ENCODE measurements at regions of chr3 and their contacts with region 1.

Region 1: GRCh38 chr3:82293867-82294266 is 532.4 kb upstream of the GBE1 start:
- DNase-seq: no peak
- H3K4me3 Mint-ChIP-seq: no peak overlapping the region
- H3K27ac Mint-ChIP-seq: no peak overlapping the region
- H3K4me1 Mint-ChIP-seq: no peaks in the 10 kb centered on the region
- H3K27me3 Mint-ChIP-seq: no peaks in the 10 kb centered on the region

Region 2: GRCh38 chr3:82236257-82236656 is 57.6 kb before region 1 on chr3:
- intact Hi-C with region 1: loop called (anchors 10 kb)
- DNase-seq: no peak
- H3K4me3 Mint-ChIP-seq: no peak overlapping the region
- H3K27ac Mint-ChIP-seq: no peak overlapping the region
- H3K4me1 Mint-ChIP-seq: no peaks in the 10 kb centered on the region
- H3K27me3 Mint-ChIP-seq: no peaks in the 10 kb centered on the region

Region 3: DNA sequence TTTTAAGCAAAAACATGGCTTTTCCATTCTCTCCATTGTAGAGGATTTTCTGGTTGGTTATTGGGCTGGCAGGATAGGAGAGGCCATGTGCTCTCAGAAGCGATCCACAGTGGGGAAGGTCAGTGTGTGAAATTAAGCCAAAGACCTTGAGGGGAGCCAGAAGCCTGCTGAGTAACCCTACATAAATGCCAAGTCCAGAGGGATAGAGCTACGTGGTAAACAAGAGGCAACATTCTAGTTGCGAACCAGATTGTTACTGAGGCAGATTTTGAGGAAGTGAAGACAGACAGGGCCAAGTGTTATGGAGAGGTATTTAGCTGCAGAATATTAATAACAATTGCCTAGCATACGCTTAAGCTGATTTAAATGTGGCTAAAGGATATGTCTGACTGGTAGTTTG is 60.4 kb after region 1 on chr3:
- intact Hi-C with region 1: no loop called
- DNase-seq: no peak
- H3K4me3 Mint-ChIP-seq: no peak overlapping the region
- H3K27ac Mint-ChIP-seq: no peak overlapping the region
- H3K4me1 Mint-ChIP-seq: no peaks in the 10 kb centered on the region
- H3K27me3 Mint-ChIP-seq: no peaks in the 10 kb centered on the region

Measured in activated T-helper 2 cell treated with anti-CD3 and anti-CD28 coated beads, Interferon-gamma antibody, Interleukin-2, Interleukin-4, amounts not matched to agents 10 μg/mL and 5 μg/mL and 100 μg/mL, durations not matched to agents 14 hours and 24 hours and 36 hours (primary cell).